ENCODE measurements at regions of chr1 and their contacts with region 1.

Region 1: DNA sequence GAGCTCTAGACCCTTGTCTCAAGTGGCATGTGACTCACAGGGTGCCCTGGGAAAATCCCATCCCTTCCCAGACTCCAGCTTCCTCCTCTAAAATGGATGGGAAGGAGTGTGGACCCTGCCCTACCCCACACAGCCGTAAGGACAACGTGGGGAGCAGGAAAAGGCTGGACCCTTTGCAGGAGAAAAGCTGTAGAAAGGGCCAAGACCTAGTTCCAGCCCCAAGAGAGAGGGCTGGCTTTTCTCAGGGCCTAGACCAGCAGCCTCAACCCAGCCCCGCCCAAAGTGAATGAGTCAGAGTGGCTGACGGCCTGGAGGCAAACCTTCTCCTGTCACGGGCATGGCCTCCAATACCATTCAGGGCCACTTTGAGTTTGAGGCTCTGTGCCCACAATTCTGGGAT is 1.1 kb downstream of the LAMB3 start:
- DNase-seq: peak; percentile 89
- H3K4me3 Mint-ChIP-seq: peak overlapping the region; percentile 36
- H3K27ac Mint-ChIP-seq: peak overlapping the region; percentile 25
- H3K4me1 Mint-ChIP-seq: peaks cover 50% of the 10 kb centered on the region
- H3K27me3 Mint-ChIP-seq: no peaks in the 10 kb centered on the region

Region 2: DNA sequence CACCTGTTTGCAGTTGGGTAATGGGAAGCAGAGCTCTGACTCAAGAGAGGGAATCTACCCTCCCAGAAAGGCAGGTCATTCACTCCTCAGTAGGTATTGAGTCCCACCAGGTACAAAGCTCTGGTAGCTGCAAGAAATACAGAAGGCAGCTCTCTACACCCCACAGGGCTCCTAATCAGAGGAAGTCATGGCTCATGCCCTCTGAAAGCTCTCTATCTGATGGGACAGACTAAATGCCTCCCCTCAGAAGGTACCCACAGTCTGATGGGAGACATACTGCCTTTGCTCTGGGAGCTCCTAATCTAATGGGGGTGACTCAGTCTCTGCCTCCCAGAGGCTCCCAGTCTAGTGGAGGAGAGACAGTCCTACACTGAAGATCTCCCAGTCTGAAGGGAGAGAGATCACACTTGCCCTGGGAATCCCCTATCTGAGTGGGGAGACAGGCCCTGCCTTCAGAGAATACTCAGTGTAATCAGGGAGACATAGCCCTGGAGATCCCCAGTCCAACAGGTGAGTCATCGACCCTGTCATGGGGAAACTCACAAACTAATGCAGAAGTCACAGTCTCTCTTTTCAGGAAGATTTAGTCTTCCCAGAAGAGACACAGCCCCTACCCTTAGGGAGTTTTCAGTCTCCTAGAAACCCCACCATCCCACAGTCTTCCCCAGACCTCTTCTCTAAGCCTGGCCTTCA is 43.9 kb before region 1 on chr1:
- CTCF ChIA-PET with region 1: interaction called, 3 read pairs
- intact Hi-C with region 1: loop called (anchors 1 kb)
- DNase-seq: peak; percentile 88
- H3K4me3 Mint-ChIP-seq: peak overlapping the region; percentile 51
- H3K27ac Mint-ChIP-seq: peak overlapping the region; percentile 86
- H3K4me1 Mint-ChIP-seq: peaks cover 11% of the 10 kb centered on the region
- H3K27me3 Mint-ChIP-seq: no peaks in the 10 kb centered on the region